GM10248 (cell line): ENCODE measurements at regions of chr1 and their contacts with region 1.

Region 1: DNA sequence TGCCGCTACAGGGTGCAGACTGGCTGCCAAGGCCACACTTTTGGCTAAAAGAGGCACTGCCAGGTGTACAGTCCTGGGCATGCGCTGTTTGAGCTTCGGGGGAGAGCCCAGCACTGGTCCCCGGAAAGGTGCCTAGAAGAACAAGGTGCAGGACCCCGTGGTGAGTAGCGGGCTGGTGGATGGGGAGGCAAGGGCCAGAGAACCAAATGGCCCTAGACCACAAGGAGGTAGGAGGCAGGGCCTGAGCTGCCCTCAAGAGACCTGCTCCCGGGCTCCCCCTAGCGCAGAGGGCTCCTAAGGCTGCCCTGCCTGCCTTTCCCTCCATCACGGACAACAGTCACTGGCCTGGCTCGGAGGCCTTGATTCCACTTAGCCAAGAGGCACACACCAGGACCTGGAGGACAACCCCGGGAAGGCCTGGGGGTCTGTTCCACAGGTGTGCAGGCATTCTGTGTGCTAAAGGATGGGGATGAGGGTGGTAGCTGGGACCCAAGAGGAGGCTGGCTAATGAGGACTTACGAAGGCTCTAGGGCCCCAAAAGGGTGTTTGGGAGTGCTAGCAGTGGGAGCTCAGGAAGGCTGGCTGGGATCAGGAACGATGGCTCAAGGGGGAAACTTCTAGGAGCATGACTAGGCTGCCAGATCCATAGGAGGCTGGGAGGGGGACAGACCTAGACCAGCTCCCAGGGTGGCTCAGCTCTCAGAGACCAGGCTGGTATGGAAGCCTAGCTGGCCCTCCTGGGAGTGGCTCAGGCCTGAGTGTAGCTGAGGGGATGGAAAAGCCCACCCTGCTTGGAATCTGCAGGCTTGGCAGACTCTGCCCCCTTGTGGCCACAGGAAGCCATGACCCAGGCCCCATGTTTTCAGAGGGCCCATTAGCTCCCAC is 742 bp downstream of the ARTN start:
- DNase-seq: peak; percentile 90
- CTCF ChIP-seq: peak; percentile 92

Region 2: DNA sequence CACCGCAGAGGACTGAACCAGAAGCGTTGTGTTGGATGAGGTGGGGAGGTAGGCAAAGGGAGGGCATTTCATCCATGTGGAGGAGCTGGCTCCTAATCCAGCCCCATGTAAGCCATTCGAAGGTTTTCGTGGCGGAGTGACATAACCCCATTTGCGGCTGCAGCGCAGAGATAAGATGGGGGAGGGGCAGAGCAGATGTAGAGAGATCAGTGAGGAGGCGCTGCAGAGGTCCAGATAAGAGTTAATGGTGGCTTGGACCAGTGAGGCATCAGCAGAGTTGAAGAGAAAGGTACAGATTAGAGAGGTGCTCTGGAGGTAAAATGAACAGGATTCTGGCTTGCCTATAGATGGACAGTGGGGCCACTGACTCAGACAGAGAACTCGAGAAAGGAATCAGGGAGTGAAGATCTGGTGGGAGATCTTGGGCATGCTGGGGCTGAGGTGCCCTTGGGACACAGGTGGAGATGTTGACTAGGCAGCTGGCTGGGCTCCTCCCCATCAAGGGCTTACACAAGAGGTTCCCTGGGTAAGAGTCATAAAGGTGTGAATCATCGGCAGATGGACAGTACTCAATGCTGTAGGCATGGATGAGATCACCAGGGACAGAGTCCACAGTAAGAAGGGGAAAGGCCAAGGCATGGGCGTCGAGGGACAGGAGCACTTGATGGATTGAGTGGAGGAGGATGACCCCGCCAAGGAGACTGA is 411.4 kb before region 1 on chr1:
- CTCF ChIA-PET with region 1: interaction called, 29 read pairs
- POLR2A ChIA-PET with region 1: no interaction called
- DNase-seq: no peak
- CTCF ChIP-seq: no peak

Region 3: GRCh38 chr1:43671626-43672330 is 262.6 kb before region 1 on chr1:
- CTCF ChIA-PET with region 1: interaction called, 18 read pairs
- POLR2A ChIA-PET with region 1: no interaction called
- DNase-seq: no peak
- CTCF ChIP-seq: no peak

Region 4: GRCh38 chr1:43783671-43784205 is 150.6 kb before region 1 on chr1:
- CTCF ChIA-PET with region 1: interaction called, 35 read pairs
- POLR2A ChIA-PET with region 1: no interaction called
- DNase-seq: peak; percentile 44
- CTCF ChIP-seq: no peak

Region 5: DNA sequence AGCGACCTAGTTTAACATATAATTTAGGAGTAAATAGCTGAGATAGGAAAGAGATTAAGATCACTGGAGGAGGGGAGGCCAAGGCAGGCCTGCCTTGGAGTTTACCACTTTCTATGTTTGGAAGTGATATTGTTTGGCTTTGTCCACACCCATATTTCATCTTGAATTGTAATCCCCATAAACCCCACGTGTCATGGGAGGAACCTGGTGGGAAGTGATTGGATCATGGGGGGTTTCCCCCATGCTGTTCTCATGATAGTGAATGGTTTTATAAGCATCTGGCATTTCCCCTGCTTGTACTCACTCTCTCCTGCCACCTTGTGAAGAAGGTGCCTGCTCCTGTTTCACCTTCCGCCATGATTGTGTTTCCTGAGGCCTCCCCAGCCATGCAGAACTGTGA is 59.0 kb before region 1 on chr1:
- CTCF ChIA-PET with region 1: interaction called, 11 read pairs
- POLR2A ChIA-PET with region 1: no interaction called
- DNase-seq: no peak
- CTCF ChIP-seq: no peak

Region 6: GRCh38 chr1:43952731-43953346 is 18.5 kb after region 1 on chr1:
- CTCF ChIA-PET with region 1: interaction called, 191 read pairs
- POLR2A ChIA-PET with region 1: no interaction called
- DNase-seq: no peak
- CTCF ChIP-seq: no peak

Region 7: DNA sequence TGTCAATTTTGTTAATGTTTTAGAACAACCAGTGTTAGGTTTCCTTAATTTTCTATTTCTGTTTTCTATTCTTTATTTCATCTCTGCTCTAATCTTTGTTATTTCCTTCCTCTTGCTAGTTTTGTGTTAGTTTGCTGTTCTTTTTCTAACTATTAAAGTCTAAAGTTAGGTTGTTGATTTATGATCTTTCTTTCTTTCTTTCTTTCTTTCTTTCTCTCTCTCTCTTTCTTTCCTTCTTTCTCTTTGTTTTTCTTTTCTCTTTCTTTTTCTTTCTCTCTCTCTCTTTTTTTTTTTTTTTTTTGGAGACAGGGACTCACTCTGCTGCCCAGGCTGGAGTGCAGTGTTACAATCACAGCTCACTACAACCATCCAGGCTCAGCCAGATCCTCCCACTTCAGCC is 224.5 kb after region 1 on chr1:
- CTCF ChIA-PET with region 1: no interaction called
- POLR2A ChIA-PET with region 1: no interaction called
- DNase-seq: no peak
- CTCF ChIP-seq: no peak